SK-N-SH (cell line): ENCODE measurements at regions of chr1 and their contacts with region 1.

Region 1: DNA sequence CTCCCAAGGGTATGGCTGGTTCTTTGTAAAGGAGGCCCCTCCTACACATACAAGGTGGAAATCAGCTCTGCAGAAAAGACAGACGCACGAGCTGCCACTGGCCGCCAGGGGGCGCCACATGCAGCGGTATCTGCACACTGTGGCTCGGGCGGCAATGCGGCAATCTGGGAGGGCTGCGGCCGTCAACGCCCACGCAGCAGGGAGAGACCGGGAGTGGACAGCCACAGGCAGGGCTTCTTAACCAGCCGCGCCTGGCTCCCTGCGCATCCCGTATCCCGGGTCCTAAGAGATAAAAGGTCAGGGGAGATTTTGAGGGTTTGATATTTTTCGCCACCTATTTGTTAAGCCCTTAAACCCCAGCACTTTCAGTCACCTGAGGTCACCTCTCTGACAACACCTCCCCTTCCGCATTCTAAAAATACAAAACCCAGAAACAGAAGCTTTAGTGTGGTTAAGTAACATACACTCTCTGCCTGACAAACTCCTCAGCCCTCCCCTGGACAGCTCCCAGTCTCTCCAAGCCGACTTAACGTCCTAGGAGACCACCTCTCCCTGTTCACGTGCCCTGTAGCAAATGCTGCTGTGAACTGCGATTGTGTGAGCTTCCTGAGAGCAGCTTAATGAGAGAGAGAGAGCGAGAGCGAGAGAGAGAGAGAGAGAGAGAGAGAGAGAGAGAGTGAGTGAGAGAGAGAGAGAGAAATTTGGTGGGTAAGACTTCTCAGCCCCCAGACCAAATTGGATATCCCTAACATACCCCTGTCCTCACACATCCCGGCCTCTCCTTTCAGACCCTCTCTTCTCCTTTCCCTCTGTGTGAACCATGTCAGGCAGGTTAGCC is 13.5 kb upstream of the KCNA2 start:
- DNase-seq: peak; percentile 88
- H3K4me3 ChIP-seq: peak overlapping the region in 1 of 2 experiments; percentile 25; a peak in 1 of 4 replicates
- H3K27ac ChIP-seq: no peak overlapping the region
- H3K4me1 ChIP-seq: peaks cover 0 to 3% of the 10 kb centered on the region in 2 experiments; a peak in 1 of 4 replicates
- H3K27me3 ChIP-seq: peaks cover 11% of the 10 kb centered on the region
- CTCF ChIP-seq: peak; percentile 92
- EP300 ChIP-seq: no peak
- RAD21 ChIP-seq: peak; percentile 73

Region 2: GRCh38 chr1:110524311-110525251 is 95.0 kb before region 1 on chr1:
- CTCF ChIA-PET with region 1: interaction called, 242 read pairs
- POLR2A ChIA-PET with region 1: no interaction called
- DNase-seq: peak; percentile 80
- H3K4me3 ChIP-seq: no peak overlapping the region; a peak in 1 of 4 replicates
- H3K27ac ChIP-seq: no peak overlapping the region
- H3K4me1 ChIP-seq: no peaks in the 10 kb centered on the region; a peak in 1 of 4 replicates
- H3K27me3 ChIP-seq: no peaks in the 10 kb centered on the region; the same call in 1 of the 2 replicates
- CTCF ChIP-seq: peak; percentile 65
- EP300 ChIP-seq: no peak
- RAD21 ChIP-seq: peak; percentile 90

Region 3: GRCh38 chr1:110572751-110573150 is 46.9 kb before region 1 on chr1:
- CTCF ChIA-PET with region 1: interaction called, 10 read pairs
- POLR2A ChIA-PET with region 1: no interaction called
- DNase-seq: no peak
- H3K4me3 ChIP-seq: no peak overlapping the region
- H3K27ac ChIP-seq: no peak overlapping the region
- H3K4me1 ChIP-seq: no peaks in the 10 kb centered on the region
- H3K27me3 ChIP-seq: no peaks in the 10 kb centered on the region; the same call in 1 of the 2 replicates
- CTCF ChIP-seq: no peak
- EP300 ChIP-seq: no peak
- RAD21 ChIP-seq: no peak

Region 4: DNA sequence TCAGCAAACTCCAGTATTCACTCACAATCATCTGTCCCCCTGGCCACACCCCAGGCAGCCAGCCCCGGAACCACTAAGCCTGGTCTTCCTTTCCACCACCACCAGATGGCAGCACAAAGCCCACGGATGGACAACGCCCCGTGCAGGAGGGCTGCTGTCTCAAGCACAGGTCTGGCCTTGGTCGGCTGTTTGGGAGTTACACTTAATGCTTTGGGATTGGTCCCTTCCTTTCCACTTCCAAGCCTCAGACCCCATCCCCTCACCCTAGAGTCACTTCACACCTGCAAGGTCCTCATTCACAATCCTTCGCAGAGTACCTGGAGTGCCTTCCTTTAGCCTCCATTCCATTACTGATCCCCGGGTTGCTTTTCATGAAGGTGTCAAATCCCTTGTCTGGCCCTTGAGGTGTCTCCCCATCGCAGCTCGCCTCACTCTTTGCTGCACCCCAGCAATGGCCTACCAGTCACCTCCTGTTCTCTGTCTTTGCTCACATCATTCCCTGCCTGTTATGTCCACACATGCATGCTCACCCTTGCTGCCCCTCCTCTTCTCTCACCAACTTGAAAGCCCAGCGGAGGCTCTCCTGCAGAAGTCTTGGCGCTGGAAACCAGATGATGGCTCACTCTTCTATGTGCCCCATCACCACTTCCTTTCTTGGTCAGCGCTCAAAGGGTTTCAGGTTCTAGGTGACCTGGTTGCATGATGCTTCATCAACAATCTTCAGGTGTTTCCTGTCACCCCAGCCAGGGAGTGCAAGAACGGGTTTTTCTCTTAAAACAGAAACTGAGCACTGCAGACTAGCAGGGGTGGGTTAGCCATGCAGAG is 11.4 kb after region 1 on chr1:
- CTCF ChIA-PET with region 1: interaction called, 25 read pairs
- POLR2A ChIA-PET with region 1: no interaction called
- DNase-seq: peak; percentile 78
- H3K4me3 ChIP-seq: no peak overlapping the region
- H3K27ac ChIP-seq: no peak overlapping the region
- H3K4me1 ChIP-seq: no peaks in the 10 kb centered on the region; a peak in 1 of 4 replicates
- H3K27me3 ChIP-seq: peaks cover 7% of the 10 kb centered on the region; the same call in 1 of the 2 replicates
- CTCF ChIP-seq: peak; percentile 78
- EP300 ChIP-seq: no peak
- RAD21 ChIP-seq: peak; percentile 84

Region 5: DNA sequence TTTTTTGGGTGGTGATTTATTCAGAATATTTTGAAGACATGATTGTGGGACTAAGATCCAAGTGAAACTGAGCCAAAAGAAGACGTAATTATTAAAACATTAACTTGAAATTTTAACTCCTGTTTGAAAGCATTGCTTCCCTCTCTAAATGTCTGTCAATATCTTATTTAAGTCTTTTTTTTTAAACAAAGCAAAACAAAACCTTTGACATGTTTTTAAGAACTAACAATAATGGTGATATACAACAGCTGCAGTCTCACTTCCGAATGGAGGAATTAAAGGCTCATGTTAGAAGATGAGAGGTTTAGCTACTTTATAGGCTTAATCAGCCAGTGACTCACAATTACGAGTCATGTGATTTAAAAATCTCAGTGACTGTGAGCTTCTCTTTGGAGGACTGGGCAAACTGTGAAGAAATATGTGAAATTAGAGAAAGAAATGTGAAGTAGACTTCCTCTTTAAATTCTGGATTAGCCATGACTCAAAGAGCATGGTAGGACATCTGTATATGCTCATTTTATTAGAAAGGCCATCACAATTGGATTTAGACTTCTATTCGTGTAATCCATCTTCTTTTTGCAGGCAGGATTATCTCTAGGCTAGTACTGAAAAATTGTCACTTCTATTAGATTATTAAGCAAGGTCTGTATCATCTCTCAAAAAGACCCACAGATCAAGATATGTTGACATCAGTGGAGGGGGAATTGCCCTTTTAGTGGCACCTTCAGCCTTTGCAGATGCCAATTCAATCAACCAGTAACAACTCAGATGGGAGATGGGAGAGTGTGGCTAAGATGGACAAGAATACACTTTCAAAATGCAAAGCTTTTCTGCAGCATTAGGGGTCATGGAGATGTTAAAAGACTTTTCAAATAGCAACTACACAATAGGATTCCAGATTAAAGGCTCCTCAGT is 26.4 kb after region 1 on chr1:
- CTCF ChIA-PET with region 1: interaction called, 13 read pairs
- POLR2A ChIA-PET with region 1: no interaction called
- DNase-seq: no peak
- H3K4me3 ChIP-seq: no peak overlapping the region
- H3K27ac ChIP-seq: no peak overlapping the region
- H3K4me1 ChIP-seq: peaks cover 0 to 23% of the 10 kb centered on the region in 2 experiments; a peak in 1 of 4 replicates
- H3K27me3 ChIP-seq: no peaks in the 10 kb centered on the region
- CTCF ChIP-seq: no peak
- EP300 ChIP-seq: no peak
- RAD21 ChIP-seq: no peak

Region 6: DNA sequence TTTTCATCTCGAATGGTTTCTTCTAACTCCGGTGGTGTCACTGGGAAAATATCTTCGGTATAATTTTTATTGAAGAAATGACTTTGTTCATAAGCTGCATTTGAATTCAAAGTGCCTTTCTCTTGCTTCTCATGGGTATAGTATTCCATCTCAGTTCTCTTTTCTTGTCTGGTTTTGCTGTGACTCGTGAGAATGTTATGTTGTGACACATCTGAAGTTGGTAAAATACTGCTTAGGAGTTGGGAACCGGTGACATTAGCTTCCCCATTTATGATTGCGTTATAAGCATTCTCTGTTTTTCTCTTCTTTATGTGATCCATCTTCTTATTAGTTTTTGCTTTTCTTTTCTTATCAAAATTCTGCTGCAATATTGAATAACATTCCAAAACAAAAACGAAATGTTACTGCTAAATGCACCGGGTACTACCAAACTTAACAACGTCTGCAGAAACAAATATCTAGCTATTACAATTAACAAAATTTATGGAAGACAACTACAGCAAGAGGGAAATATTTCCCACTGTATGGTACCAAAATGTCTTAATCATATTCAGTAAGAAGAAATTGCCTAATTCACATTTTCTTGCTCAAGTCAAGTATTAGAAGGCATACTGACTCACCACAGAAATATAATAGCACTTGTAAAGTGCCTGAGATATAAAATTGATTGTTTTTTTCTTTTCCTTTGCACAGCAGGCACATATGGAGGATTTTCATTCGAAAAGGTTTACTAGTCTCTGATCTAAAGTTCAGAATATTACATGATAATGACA is 328.6 kb after region 1 on chr1:
- CTCF ChIA-PET with region 1: no interaction called
- POLR2A ChIA-PET with region 1: no interaction called
- DNase-seq: no peak
- H3K4me3 ChIP-seq: no peak overlapping the region
- H3K27ac ChIP-seq: no peak overlapping the region
- H3K4me1 ChIP-seq: no peaks in the 10 kb centered on the region
- H3K27me3 ChIP-seq: no peaks in the 10 kb centered on the region
- CTCF ChIP-seq: no peak
- EP300 ChIP-seq: no peak
- RAD21 ChIP-seq: no peak